ENCODE measurements at regions of chr5 and their contacts with region 1.

Region 1: DNA sequence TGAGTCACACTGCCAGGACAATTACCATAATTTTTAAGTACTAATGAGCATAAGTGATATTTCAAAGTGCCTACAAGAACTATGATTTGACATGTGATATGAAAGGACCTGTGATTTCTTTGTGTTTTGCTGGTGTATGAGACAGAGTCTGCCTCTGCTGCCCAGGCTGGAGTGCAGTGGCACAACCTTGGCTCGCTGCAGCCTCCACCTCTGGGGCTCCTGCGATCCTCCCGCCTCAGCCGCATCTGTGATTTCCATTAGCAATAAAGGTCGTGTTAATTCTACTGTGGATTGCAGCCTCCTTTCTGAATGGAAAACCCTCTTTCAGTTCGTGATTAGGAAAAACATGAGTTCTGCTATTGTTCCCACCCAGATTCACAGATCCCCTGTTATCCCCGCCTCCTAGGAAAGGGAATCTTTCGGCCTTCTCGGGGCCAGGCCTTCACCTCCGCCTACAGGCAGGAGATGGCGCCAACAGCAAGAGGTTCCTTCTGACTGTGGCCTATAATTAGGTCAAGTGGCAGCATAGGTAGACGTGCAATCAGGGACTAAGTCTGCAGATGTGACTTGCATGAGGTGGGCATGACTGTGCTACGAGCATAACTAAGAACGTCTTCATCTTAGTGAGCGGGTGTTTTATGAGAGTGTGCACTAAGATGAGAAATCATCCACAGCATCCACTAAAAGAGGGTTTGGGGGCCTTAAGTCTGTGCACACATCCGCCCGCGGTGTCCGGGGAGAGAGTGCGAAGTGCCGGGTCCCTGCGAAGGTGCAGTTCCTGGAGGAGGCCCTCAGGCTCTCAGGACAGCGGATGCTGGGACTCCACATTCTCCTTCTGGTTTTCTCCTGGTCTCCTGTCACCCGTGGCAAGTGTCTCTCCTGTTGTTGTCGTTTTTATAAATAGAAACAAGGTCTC is 23.1 kb downstream of the TRIM7 start:
- DNase-seq: peak; percentile 77
- H3K4me3 ChIP-seq: no peak overlapping the region
- H3K27ac ChIP-seq: no peak overlapping the region
- H3K4me1 ChIP-seq: no peaks in the 10 kb centered on the region
- H3K27me3 ChIP-seq: peaks cover 3 to 4% of the 10 kb centered on the region in 2 experiments
- CTCF ChIP-seq: peak; percentile 76 to 79
- POLR2A ChIP-seq: no peak

Region 2: GRCh38 chr5:181159286-181159829 is 22.6 kb before region 1 on chr5:
- CTCF ChIA-PET with region 1: interaction called, 3 read pairs
- POLR2A ChIA-PET with region 1: no interaction called
- dilution Hi-C with region 1: no loop called
- intact Hi-C with region 1: loop called (anchors 1 kb)
- DNase-seq: peak; percentile 53
- H3K4me3 ChIP-seq: no peak overlapping the region
- H3K27ac ChIP-seq: no peak overlapping the region
- H3K4me1 ChIP-seq: peaks cover 10% of the 10 kb centered on the region
- H3K27me3 ChIP-seq: no peaks in the 10 kb centered on the region
- CTCF ChIP-seq: peak; percentile 71 to 74
- POLR2A ChIP-seq: no peak